H1 (cell line): ENCODE measurements at regions of chr15 and their contacts with region 1.

Region 1: DNA sequence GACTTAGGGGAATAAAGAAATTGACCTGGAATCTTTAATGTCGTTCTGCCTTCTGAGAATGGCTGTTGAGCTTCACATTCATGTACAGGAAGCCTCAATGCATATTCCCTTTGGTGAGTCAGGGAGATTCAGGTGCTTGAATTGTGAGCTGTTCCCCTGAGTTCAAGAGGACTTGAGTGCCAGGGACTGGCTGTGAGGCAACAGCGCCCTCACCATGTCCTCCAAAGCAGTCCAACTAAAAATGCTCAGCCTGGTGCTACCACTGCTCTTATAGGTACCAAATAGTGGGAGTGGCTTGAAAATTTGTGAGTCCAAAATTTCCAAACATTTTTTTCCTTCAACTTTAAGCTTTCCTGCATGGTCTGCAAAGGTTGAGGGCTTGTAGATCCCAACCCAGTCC is 54.1 kb downstream of the LEO1 start:
- DNase-seq: peak in 1 of 2 experiments; percentile 31
- H3K4me3 ChIP-seq: no peak overlapping the region
- H3K27ac ChIP-seq: no peak overlapping the region
- H3K4me1 ChIP-seq: no peaks in the 10 kb centered on the region; a peak in 1 of 7 replicates
- H3K27me3 ChIP-seq: no peaks in the 10 kb centered on the region
- CTCF ChIP-seq: peak; percentile 75 to 84 (median 78)
- EP300 ChIP-seq: no peak
- POLR2A ChIP-seq: no peak
- RAD21 ChIP-seq: peak; percentile 81 to 87

Region 2: GRCh38 chr15:51782357-51782896 is 135.1 kb before region 1 on chr15:
- CTCF ChIA-PET with region 1: interaction called, 27 read pairs
- POLR2A ChIA-PET with region 1: no interaction called
- DNase-seq: no peak
- H3K4me3 ChIP-seq: no peak overlapping the region
- H3K27ac ChIP-seq: no peak overlapping the region
- H3K4me1 ChIP-seq: peaks cover 0 to 6% (median 0%) of the 10 kb centered on the region in 4 experiments; a peak in 2 of 7 replicates
- H3K27me3 ChIP-seq: no peaks in the 10 kb centered on the region
- CTCF ChIP-seq: peak in 2 of 3 experiments; percentile 80 to 84; a peak in 3 of 4 replicates
- EP300 ChIP-seq: no peak
- POLR2A ChIP-seq: no peak
- RAD21 ChIP-seq: peak; percentile 93 to 94

Region 3: GRCh38 chr15:51888593-51889195 is 28.8 kb before region 1 on chr15:
- CTCF ChIA-PET with region 1: interaction called, 10 read pairs
- POLR2A ChIA-PET with region 1: no interaction called
- DNase-seq: no peak
- H3K4me3 ChIP-seq: no peak overlapping the region
- H3K27ac ChIP-seq: no peak overlapping the region
- H3K4me1 ChIP-seq: no peaks in the 10 kb centered on the region
- H3K27me3 ChIP-seq: no peaks in the 10 kb centered on the region
- CTCF ChIP-seq: peak in 2 of 3 experiments; percentile 31 to 61; a peak in 2 of 4 replicates
- EP300 ChIP-seq: no peak
- POLR2A ChIP-seq: no peak
- RAD21 ChIP-seq: peak in 1 of 2 experiments; percentile 26; a peak in 3 of 4 replicates

Region 4: GRCh38 chr15:51907136-51907914 is 10.2 kb before region 1 on chr15:
- CTCF ChIA-PET with region 1: interaction called, 21 read pairs
- POLR2A ChIA-PET with region 1: interaction called, 3 read pairs
- DNase-seq: no peak
- H3K4me3 ChIP-seq: no peak overlapping the region
- H3K27ac ChIP-seq: no peak overlapping the region; the same call in 1 of the 2 replicates
- H3K4me1 ChIP-seq: no peaks in the 10 kb centered on the region
- H3K27me3 ChIP-seq: peaks cover 0 to 1% (median 0%) of the 10 kb centered on the region in 4 experiments; a peak in 1 of 7 replicates
- CTCF ChIP-seq: peak; percentile 16 to 57 (median 48)
- EP300 ChIP-seq: no peak
- POLR2A ChIP-seq: no peak
- RAD21 ChIP-seq: peak; percentile 23 to 42; a peak in 3 of 4 replicates

Region 5: DNA sequence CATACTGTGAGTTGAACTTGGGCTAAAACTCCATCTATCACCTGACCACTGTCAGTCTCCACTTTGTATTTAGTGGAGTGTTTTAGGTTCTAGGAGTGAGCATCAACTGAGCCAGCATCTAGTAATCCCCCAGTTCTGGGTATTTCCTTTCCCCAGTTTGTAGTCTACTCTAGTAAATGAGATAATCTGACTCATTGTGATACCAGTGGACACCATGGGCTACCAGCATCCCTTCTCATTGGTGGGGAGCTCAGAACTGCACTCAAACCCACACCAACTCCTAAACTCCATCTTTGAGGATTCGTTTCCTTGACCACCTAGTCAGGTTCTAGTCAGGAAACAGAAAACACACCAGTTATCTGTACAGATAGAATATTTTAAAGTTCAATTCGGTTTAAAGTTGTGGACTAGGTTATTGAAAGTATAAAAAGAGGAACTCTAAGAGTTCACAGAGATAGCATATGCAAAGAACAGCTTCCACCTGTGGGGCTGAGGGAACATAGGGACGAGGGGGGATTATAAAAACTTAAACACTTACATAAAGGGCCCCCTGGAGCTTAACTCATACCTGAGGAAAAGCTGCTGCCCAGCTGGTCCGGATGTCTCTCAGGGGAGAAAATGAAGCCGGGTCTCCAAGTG is 18.1 kb after region 1 on chr15:
- CTCF ChIA-PET with region 1: interaction called, 12 read pairs
- POLR2A ChIA-PET with region 1: interaction called, 4 read pairs
- DNase-seq: no peak
- H3K4me3 ChIP-seq: peak overlapping the region in 1 of 4 experiments; percentile 41; a peak in 2 of 8 replicates
- H3K27ac ChIP-seq: no peak overlapping the region
- H3K4me1 ChIP-seq: peaks cover 0 to 4% (median 0%) of the 10 kb centered on the region in 4 experiments; a peak in 2 of 7 replicates
- H3K27me3 ChIP-seq: no peaks in the 10 kb centered on the region
- CTCF ChIP-seq: no peak
- EP300 ChIP-seq: no peak
- POLR2A ChIP-seq: no peak
- RAD21 ChIP-seq: no peak

Region 6: DNA sequence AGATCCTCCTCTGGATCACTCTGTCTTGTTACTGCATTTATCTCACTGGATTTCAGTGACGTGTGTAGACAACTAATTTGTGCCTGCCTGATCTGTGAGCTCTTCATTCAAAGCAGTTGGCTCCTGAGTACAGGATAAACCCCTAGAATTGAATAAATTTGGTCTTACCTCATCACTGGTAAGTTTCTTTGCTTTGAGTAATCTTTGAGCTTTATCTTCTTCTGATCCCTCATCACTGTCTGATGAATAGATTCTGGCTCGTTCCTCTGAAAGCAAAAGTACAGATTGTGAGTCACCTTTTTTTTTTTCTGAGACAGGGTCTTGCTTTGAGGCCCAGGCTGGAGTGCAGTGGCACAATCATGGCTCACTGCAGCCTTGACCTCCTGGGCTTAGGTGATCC is 29.6 kb after region 1 on chr15:
- CTCF ChIA-PET with region 1: interaction called, 10 read pairs
- POLR2A ChIA-PET with region 1: no interaction called
- DNase-seq: no peak
- H3K4me3 ChIP-seq: no peak overlapping the region
- H3K27ac ChIP-seq: no peak overlapping the region
- H3K4me1 ChIP-seq: no peaks in the 10 kb centered on the region
- H3K27me3 ChIP-seq: no peaks in the 10 kb centered on the region
- CTCF ChIP-seq: no peak
- EP300 ChIP-seq: no peak
- POLR2A ChIP-seq: no peak
- RAD21 ChIP-seq: no peak

Region 7: DNA sequence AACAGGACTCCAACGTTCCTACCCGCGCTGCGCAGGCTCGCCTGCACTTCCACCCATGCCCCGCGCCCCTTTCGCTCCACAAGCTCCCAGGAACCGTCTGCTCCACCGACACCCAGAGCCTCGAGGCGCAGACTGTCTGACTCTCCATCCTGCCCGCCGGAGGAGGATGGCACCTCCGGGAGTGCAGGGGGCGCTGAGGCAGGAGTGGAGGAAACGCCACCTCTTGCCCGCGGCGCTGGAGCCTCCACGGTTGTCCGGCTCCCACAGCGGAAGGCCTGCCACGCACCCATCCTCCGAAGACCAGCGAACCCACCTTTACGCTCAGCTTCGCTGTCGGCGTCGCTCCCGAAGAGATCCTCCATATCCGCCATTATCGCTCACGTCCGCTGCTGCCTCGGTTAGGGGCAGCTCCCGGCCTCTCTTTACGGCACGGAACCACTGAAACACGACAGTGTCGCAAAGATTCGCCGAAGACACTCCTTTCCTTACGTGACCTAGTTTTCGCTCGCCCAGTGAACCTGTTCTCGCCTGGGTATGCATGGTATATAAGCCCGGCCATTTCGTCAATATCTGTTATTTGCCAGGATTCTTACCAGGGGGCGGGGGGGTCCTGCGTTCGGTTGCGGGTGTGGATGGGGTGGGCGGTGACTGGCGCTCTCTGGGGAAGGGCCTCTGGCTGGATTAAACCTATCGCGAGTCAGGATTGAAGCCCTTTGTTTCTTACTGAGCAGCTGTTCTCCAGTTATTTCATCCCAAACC is 54.1 kb after region 1 on chr15 and contains the start of gene LEO1:
- CTCF ChIA-PET with region 1: no interaction called
- POLR2A ChIA-PET with region 1: no interaction called
- DNase-seq: peak; percentile 81 to 83
- H3K4me3 ChIP-seq: peak within 1 kb of the TSS; percentile 92 to 100 (median 100)
- H3K27ac ChIP-seq: peak within 1 kb of the TSS; percentile 97
- H3K4me1 ChIP-seq: no peaks in the 10 kb centered on the region; a peak in 1 of 7 replicates
- H3K27me3 ChIP-seq: no peaks in the 10 kb centered on the region
- CTCF ChIP-seq: peak in 2 of 3 experiments; percentile 23 to 27; a peak in 2 of 4 replicates
- EP300 ChIP-seq: no peak
- POLR2A ChIP-seq: peak; percentile 74 to 86
- RAD21 ChIP-seq: no peak
- total RNA-seq, gene LEO1: 27.4 and 29.2 TPM in 2 replicates